GM10248 (cell line): ENCODE measurements at regions of chr6 and their contacts with region 1.

Region 1: GRCh38 chr6:3202999-3203696 is 24.3 kb downstream of the TUBB2B start:
- DNase-seq: no peak
- CTCF ChIP-seq: no peak

Region 2: GRCh38 chr6:3023663-3024483 is 179.3 kb before region 1 on chr6:
- CTCF ChIA-PET with region 1: no interaction called
- POLR2A ChIA-PET with region 1: no interaction called
- DNase-seq: peak; percentile 88
- CTCF ChIP-seq: no peak

Region 3: GRCh38 chr6:3052481-3053230 is 150.5 kb before region 1 on chr6:
- CTCF ChIA-PET with region 1: no interaction called
- POLR2A ChIA-PET with region 1: interaction called, 13 read pairs
- DNase-seq: no peak
- CTCF ChIP-seq: no peak